ENCODE measurements at regions of chr5 and their contacts with region 1.

Region 1: GRCh38 chr5:178146020-178146820 is 7.5 kb downstream of the NHP2 start:
- DNase-seq: no peak
- H3K4me3 ChIP-seq: no peak overlapping the region
- H3K27me3 ChIP-seq: no peaks in the 10 kb centered on the region
- CTCF ChIP-seq: peak; percentile 77

Region 2: DNA sequence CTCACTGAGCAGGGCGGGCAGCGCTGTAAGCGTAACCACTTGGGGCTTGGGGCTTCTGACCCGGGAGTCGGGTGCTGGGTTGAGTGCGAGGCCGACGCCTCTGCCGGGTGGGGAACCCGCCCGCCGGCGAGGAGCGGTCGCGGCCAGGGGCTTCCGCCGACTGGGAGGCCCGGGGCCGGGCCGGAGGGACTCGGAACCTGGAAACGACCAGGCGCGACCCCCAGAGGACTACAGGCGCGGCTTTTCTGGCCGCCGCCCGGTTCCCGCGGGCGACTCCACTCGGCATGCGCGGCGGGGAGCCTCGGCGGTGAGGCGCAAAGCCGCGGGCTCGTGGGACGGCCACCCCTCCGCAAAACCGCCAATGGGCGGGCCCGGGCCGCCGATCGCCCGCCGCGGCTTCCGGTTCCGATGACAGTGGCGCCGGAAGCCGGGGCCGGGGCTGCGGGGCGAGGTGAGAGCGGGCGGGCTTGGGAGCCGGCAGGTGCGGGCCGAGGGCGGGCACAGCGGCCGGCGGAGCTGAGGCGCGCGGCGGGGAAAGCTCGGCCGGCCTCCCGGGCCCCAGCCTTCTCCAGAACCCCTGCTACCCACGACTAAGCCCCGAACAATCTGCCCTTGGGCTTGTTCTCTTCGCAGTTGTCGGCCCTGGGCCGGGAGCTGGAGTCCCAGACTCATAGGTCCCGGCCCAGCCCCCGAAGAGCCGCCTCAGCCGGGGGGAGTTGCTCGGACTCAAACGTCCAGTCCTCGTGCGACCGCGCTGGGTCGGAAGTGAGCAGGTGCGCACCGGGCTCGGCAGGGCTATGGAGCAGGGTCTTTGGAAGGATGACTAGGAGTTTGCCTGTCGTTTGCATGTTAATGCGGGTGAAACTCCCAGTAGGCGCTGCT is 15.4 kb before region 1 on chr5 and contains the start of gene RMND5B:
- CTCF ChIA-PET with region 1: interaction called, 12 read pairs
- POLR2A ChIA-PET with region 1: no interaction called
- DNase-seq: no peak
- H3K4me3 ChIP-seq: peak within 1 kb of the TSS; percentile 89
- H3K27me3 ChIP-seq: no peaks in the 10 kb centered on the region
- CTCF ChIP-seq: no peak
- polyA plus RNA-seq, gene RMND5B: 25.3 and 39.6 TPM in 2 replicates

Region 3: GRCh38 chr5:178271726-178272479 is 125.7 kb after region 1 on chr5:
- CTCF ChIA-PET with region 1: no interaction called
- POLR2A ChIA-PET with region 1: no interaction called
- DNase-seq: no peak
- H3K4me3 ChIP-seq: no peak overlapping the region
- H3K27me3 ChIP-seq: no peaks in the 10 kb centered on the region; the same call in 1 of the 2 replicates
- CTCF ChIP-seq: no peak